ENCODE measurements at regions of chr16 and their contacts with region 1.

Region 1: DNA sequence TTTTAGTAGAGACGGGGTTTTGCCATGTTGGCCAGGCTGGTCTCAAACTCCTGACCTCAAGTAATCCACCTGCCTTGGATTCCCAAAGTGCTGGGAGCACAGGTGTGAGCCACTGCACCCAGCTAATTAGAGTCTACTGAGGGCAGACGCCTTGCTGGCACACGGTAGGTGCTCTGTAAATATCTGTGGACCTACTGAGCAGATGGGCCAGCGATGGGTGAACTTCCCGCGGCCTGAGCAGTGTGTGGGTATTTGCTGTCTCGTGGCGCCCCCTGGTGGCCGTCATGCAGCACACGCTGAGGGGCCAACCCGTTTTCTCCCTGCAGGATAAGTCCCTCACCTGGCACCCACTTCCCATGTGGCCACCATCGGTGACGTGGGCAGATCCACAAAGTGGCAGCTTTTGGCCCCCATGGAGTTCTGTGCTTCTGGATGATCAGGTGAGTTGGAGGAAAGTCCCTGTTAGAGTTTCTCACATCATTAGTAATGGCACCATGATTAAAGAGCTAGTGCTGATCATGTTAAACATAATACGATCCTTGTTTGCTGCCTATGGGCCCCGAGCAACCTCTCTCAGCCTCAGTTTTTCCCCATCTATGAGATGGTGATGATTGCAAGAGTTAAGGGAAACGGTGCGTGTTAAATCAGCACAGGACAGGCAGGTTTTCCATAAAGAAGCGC is 40.7 kb downstream of the ZDHHC7 start:
- DNase-seq: peak; percentile 85
- H3K4me3 ChIP-seq: no peak overlapping the region; a peak in 1 of 4 replicates
- H3K27ac ChIP-seq: no peak overlapping the region
- H3K4me1 ChIP-seq: peaks cover 2 to 4% of the 10 kb centered on the region in 2 experiments; a peak in 1 of 4 replicates
- H3K27me3 ChIP-seq: no peaks in the 10 kb centered on the region
- CTCF ChIP-seq: peak; percentile 97
- EP300 ChIP-seq: no peak
- RAD21 ChIP-seq: peak; percentile 90

Region 2: DNA sequence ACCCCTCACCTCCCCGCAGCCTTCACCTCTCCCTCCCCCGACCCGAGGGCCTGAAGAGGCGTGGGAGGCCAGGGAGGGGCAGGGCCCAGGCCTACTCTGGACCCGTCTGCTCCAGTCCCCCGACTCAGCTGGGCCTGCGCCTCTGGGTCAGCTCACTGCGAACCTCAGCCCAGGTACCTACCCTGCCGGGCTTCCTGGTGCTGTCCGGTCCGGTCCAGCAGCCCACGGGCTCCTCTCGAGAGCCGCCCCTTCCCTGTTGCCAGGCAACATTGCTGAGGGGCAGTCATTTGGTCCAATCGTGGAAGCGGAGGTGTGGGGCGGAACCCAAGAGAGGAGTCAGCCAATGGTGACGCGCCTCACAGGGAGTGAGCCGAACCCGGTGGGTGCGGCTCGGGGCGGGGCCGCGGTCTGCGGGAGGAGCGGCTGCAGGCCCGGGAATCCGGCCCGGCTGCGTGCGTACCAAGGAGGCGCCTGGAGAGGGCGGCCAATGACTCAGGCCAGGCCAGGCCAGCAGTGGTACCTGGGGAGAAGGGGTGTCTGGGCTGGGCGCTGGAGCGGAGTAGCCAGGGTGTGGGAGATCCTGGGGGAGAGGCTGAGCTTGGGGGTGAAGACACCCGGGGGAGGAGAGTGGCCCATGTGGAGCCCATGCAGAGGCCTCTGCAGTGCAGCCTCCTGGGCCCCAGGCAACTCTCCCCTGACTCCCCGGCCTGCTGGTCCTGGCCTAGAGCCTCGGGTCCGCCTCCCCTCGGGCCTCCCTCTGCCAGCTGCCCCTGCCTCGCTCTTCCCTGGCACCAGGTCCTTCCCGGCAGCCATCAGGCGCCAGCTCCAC is 466.0 kb before region 1 on chr16 and contains the start of gene MEAK7:
- CTCF ChIA-PET with region 1: interaction called, 10 read pairs
- POLR2A ChIA-PET with region 1: no interaction called
- DNase-seq: peak; percentile 98
- H3K4me3 ChIP-seq: peak within 1 kb of the TSS; percentile 73 to 93
- H3K27ac ChIP-seq: peak within 1 kb of the TSS; percentile 67 to 82
- H3K4me1 ChIP-seq: peaks cover 14 to 18% of the 10 kb centered on the region in 2 experiments; a peak in 3 of 4 replicates
- H3K27me3 ChIP-seq: no peaks in the 10 kb centered on the region
- CTCF ChIP-seq: peak; percentile 19; the same call in 1 of the 2 replicates
- EP300 ChIP-seq: no peak
- RAD21 ChIP-seq: no peak
- polyA plus RNA-seq, gene MEAK7: 11.9 and 19.0 TPM in 2 replicates

Region 3: GRCh38 chr16:84720177-84720579 is 250.4 kb before region 1 on chr16:
- CTCF ChIA-PET with region 1: interaction called, 25 read pairs
- POLR2A ChIA-PET with region 1: no interaction called
- DNase-seq: peak; percentile 71
- H3K4me3 ChIP-seq: peak overlapping the region; percentile 12 to 27; a peak in 2 of 4 replicates
- H3K27ac ChIP-seq: peak overlapping the region; percentile 68 to 84
- H3K4me1 ChIP-seq: peaks cover 22 to 30% of the 10 kb centered on the region in 2 experiments; a peak in 3 of 4 replicates
- H3K27me3 ChIP-seq: no peaks in the 10 kb centered on the region
- CTCF ChIP-seq: peak; percentile 10; the same call in 1 of the 2 replicates
- EP300 ChIP-seq: peak in 1 of 2 experiments; percentile 81; a peak in 2 of 4 replicates
- RAD21 ChIP-seq: no peak

Region 4: DNA sequence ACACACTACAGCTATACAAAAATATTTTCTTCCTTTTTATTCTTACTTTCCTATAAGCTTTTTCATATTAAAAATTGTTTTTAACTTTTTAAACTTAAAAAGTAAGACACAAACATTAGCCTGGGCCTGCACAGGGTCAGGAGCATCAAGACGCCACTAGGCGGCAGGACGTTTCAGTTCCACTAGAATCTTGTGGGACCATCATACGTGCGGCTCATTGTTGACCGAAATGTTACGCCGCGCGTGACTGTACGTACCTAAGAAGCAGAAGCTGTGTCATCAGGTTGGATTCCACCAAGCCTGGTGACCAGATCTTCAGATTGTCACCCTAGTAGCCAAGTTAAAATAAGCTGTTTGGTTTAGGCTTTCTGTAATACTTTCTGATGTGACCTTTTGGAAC is 223.7 kb before region 1 on chr16:
- CTCF ChIA-PET with region 1: interaction called, 428 read pairs
- POLR2A ChIA-PET with region 1: no interaction called
- DNase-seq: no peak
- H3K4me3 ChIP-seq: no peak overlapping the region; a peak in 1 of 4 replicates
- H3K27ac ChIP-seq: no peak overlapping the region
- H3K4me1 ChIP-seq: peaks cover 0 to 4% of the 10 kb centered on the region in 2 experiments; a peak in 2 of 4 replicates
- H3K27me3 ChIP-seq: no peaks in the 10 kb centered on the region
- CTCF ChIP-seq: peak; percentile 49
- EP300 ChIP-seq: no peak
- RAD21 ChIP-seq: no peak

Region 5: DNA sequence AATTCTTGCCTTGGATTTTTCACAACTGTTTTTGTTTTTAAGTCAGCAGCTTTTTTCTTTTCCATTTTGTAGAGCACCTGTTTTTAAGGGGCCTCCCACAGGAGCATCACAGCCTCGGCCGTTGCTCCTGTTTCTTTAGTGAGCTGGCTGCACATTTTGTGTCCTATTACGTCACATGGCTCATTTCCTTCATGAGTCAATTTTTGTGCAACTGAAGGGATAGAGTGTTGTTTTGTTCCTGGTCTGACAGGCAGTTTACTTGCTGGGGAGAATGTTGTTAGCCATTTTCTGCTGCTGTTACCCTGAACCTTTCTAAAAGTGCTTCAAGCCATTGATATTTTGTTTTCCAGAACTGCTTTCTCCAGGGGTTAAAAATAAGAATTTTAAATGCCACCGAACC is 195.8 kb before region 1 on chr16:
- CTCF ChIA-PET with region 1: interaction called, 29 read pairs
- POLR2A ChIA-PET with region 1: no interaction called
- DNase-seq: no peak
- H3K4me3 ChIP-seq: no peak overlapping the region
- H3K27ac ChIP-seq: no peak overlapping the region
- H3K4me1 ChIP-seq: no peaks in the 10 kb centered on the region
- H3K27me3 ChIP-seq: no peaks in the 10 kb centered on the region
- CTCF ChIP-seq: no peak
- EP300 ChIP-seq: no peak
- RAD21 ChIP-seq: no peak

Region 6: DNA sequence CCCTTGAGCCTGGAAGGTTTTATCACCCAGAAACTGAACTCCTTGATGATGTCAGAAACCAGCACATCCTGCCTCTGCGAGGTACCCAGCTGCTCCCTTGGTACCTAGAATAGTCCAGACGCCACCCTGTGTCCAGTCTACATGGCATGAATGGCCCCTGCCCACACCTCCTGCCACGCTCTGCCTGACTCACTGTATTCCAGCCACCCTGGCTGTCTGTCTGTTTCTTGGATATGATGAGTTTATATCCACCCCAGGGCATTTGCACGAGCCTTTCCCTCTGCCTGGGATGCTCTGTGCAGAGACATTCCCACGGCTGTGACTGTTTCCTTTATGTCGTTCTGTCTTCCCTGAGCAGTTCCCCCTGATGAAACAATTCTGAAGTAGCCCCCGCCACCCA is 82.1 kb before region 1 on chr16:
- CTCF ChIA-PET with region 1: no interaction called
- POLR2A ChIA-PET with region 1: no interaction called
- DNase-seq: no peak
- H3K4me3 ChIP-seq: no peak overlapping the region
- H3K27ac ChIP-seq: no peak overlapping the region
- H3K4me1 ChIP-seq: no peaks in the 10 kb centered on the region; a peak in 1 of 4 replicates
- H3K27me3 ChIP-seq: no peaks in the 10 kb centered on the region
- CTCF ChIP-seq: no peak
- EP300 ChIP-seq: no peak
- RAD21 ChIP-seq: no peak

Region 7: GRCh38 chr16:84925092-84925772 is 45.4 kb before region 1 on chr16:
- CTCF ChIA-PET with region 1: interaction called, 35 read pairs
- POLR2A ChIA-PET with region 1: no interaction called
- DNase-seq: peak; percentile 56
- H3K4me3 ChIP-seq: no peak overlapping the region; a peak in 1 of 4 replicates
- H3K27ac ChIP-seq: no peak overlapping the region
- H3K4me1 ChIP-seq: peaks cover 0 to 20% of the 10 kb centered on the region in 2 experiments; a peak in 1 of 4 replicates
- H3K27me3 ChIP-seq: no peaks in the 10 kb centered on the region
- CTCF ChIP-seq: peak; percentile 73
- EP300 ChIP-seq: no peak
- RAD21 ChIP-seq: peak; percentile 56

Region 8: GRCh38 chr16:84988322-84989080 is 17.9 kb after region 1 on chr16:
- CTCF ChIA-PET with region 1: interaction called, 41 read pairs
- POLR2A ChIA-PET with region 1: no interaction called
- DNase-seq: no peak
- H3K4me3 ChIP-seq: no peak overlapping the region
- H3K27ac ChIP-seq: no peak overlapping the region
- H3K4me1 ChIP-seq: peaks cover 4 to 16% of the 10 kb centered on the region in 2 experiments; a peak in 3 of 4 replicates
- H3K27me3 ChIP-seq: no peaks in the 10 kb centered on the region
- CTCF ChIP-seq: 0 out of 2 replicates have a peak, but pooled peaks have one; percentile 19
- EP300 ChIP-seq: no peak
- RAD21 ChIP-seq: no peak

Region 9: DNA sequence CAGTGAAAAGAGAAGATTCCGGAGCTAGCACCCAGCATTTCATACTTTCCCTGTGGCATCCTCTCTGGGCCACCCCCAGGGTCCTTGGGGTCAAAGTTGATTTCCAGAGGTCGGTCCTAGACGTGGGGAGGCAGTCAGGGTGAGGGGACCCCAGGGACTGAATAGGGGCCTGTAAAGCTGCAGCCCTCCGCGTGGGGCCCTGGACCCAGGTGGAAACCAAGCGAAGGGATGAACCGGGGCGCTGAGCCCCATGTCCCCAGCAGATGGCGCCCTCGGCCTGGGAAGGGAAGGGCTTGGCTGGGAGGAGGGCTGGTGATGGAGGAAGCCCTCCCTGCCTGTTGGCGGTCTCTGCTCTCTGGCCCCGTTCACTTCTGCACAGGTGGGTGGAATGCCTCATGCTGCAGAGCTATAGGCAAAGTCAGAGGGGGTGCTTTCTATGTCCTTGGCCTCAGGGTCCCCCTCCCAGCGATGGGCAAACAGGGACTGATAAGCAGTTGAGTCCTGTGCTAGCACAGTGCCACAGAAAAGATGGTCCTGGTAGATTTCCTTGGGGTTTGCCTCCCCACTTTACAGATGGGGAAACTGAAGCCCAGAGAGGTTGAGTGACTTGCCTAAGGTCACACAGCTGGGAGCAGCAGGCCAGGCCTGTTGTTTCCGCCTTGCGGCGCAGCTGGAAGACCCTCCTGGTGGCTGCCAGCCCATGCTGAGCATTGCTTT is 305.1 kb after region 1 on chr16:
- CTCF ChIA-PET with region 1: no interaction called
- POLR2A ChIA-PET with region 1: no interaction called
- DNase-seq: peak; percentile 95
- H3K4me3 ChIP-seq: peak overlapping the region in 1 of 2 experiments; percentile 21; a peak in 1 of 4 replicates
- H3K27ac ChIP-seq: peak overlapping the region in 1 of 2 experiments; percentile 31; a peak in 1 of 4 replicates
- H3K4me1 ChIP-seq: peaks cover 0 to 46% of the 10 kb centered on the region in 2 experiments; a peak in 2 of 4 replicates
- H3K27me3 ChIP-seq: no peaks in the 10 kb centered on the region
- CTCF ChIP-seq: peak; percentile 88
- EP300 ChIP-seq: no peak
- RAD21 ChIP-seq: peak; percentile 94

Measured in SK-N-SH (cell line).